ENCODE measurements at regions of chrX and their contacts with region 1.

Region 1: GRCh38 chrX:102548231-102548630 is 31.7 kb upstream of the TMSB15A start:
- DNase-seq: no peak

Region 2: DNA sequence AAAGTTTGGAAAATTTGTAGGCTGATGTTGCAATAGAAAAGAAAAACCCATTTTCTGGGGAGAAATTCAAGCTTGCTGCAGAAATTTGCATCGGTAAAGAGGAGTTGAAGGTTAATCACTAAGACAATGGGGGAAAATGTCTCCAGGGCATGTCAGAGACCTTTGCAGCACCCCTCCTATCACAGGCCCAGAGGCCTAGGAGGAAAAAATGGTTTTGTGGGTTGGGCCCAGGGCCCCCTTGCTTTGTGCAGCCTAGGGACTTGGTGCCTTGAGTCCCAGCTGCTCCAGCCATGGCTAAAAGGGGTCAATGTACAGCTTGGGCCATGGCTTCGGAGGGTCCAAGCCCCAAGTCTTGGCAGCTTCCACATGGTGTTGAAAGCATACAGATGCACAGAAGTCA is 49.5 kb before region 1 on chrX:
- intact Hi-C with region 1: loop called in 1 of 2 experiments (anchors 2 kb)
- DNase-seq: no peak